ENCODE measurements at regions of chr7 and their contacts with region 1.

Region 1: GRCh38 chr7:30625283-30625682 is 30.6 kb downstream of the GARS1 start:
- DNase-seq: no peak
- H3K4me3 ChIP-seq: no peak overlapping the region
- H3K27ac ChIP-seq: no peak overlapping the region
- H3K4me1 ChIP-seq: no peaks in the 10 kb centered on the region
- H3K27me3 ChIP-seq: no peaks in the 10 kb centered on the region
- CTCF ChIP-seq: no peak

Region 2: GRCh38 chr7:30548762-30549344 is 76.4 kb before region 1 on chr7:
- intact Hi-C with region 1: no loop called
- DNase-seq: peak; percentile 83
- H3K4me3 ChIP-seq: no peak overlapping the region
- H3K27ac ChIP-seq: no peak overlapping the region
- H3K4me1 ChIP-seq: peaks cover 3% of the 10 kb centered on the region
- H3K27me3 ChIP-seq: no peaks in the 10 kb centered on the region
- CTCF ChIP-seq: peak; percentile 87

Region 3: GRCh38 chr7:30731619-30732018 is 106.3 kb after region 1 on chr7:
- intact Hi-C with region 1: loop called (anchors 10 kb)
- DNase-seq: no peak
- H3K4me3 ChIP-seq: no peak overlapping the region
- H3K27ac ChIP-seq: no peak overlapping the region
- H3K4me1 ChIP-seq: no peaks in the 10 kb centered on the region
- H3K27me3 ChIP-seq: no peaks in the 10 kb centered on the region
- CTCF ChIP-seq: no peak